ENCODE measurements at regions of chr16 and their contacts with region 1.

Region 1: GRCh38 chr16:28846080-28846932 is at the start of gene TUFM:
- DNase-seq: peak; percentile 99 to 100
- ATAC-seq: peak; percentile 98
- H3K4me3 ChIP-seq: peak within 1 kb of the TSS; percentile 56 to 63
- H3K27ac ChIP-seq: peak within 1 kb of the TSS in 1 of 2 donors; percentile 71
- H3K4me1 ChIP-seq: no peaks in the 10 kb centered on the region
- H3K27me3 ChIP-seq: no peaks in the 10 kb centered on the region
- total RNA-seq, gene TUFM: 71.2 to 71.5 TPM

Region 2: DNA sequence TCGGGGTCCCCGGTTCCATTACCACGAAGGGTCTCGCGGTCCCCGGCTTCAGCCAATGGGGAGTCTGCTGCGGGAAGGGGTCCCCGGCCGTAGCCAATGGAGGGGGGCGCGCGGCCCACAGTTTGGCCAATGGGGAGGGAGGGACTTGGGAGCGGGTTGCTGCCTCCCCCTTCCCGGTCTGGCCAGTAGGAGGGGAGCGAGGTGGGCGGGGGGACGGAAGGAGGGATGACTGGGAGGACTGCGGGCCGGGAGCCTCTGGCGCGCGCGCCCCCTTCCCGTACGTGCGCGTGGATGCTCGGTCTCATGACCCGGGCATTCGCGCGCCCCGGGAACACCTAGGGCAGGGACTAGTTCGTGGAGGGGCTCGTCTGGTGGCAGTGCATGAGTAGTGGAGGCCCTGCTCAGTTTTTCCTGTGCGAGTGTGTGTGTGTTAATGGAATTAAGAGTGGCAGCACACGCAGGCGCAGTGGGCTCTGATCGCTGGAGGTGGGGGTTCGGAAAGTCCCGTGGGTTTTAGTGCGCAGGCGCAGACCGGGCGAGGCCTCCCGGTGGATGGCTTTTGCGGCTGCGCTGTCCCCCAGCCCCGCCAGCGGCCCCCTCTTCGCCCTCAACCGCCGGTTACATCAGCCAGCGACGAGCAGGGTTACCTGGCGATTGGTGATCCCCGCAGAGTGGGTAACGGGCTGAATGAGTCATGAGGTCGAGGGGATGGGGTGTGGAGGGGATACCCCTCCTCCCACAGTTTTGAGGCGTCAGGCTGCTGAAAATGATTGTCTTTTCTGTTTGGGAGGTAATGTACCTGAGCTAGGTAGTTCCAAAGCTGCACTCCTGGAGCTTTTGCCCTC is 22.2 kb before region 1 on chr16:
- intact Hi-C with region 1: loop called in 1 of 2 experiments (anchors 2 kb)
- DNase-seq: peak; percentile 99
- ATAC-seq: peak; percentile 96
- H3K4me3 ChIP-seq: peak overlapping the region; percentile 81 to 98
- H3K27ac ChIP-seq: peak overlapping the region; percentile 96
- H3K4me1 ChIP-seq: no peaks in the 10 kb centered on the region
- H3K27me3 ChIP-seq: no peaks in the 10 kb centered on the region